T-cell (primary cell): ENCODE measurements at regions of chr11 and their contacts with region 1.

Region 1: DNA sequence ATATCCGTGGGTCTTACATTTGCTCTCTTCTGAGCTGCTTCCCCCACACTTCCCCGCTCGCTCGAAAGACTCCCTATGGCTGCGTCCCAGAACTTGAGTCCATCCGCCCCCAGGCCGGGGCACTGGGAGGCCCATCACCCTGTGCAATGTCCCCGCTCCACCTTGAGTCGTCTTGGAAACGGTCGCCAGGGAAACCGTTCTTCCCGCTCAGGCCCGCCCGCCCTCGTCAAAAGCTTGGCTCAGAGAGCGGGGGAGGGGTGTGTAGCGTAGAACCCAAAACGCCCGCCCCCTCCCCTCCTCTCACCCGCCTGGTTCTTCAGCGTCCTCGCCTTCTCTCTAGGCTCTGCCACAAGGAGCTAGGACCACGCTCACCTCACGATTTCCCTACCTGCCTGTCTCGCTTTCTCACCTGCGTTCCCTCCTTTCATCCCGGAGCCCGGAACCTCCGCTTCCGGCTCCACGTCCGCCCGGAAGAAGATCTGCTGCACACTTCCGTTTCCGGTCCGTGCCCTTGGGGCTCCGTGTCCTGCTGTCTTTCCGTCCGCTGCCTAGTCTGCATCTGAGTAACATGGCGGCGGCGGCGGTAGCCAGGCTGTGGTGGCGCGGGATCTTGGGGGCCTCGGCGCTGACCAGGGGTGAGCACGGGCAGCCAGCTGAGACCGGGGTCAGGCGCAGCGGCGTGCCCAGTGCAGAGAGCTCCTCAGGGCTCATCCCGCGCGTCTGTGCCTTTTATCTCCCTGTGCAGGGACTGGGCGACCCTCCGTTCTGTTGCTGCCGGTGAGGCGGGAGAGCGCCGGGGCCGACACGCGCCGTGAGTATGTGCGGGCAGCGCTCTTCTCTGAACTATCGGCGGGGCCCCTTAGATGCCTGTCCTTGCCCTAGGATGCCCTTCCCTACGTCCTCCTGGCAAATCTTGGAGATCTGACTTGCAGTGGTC is at the starts of genes KBTBD4 and NDUFS3:
- DNase-seq: peak; percentile 70 to 95 (median 83)
- ATAC-seq: peak; percentile 92 to 95 (median 94)
- H3K4me3 ChIP-seq: peak within 1 kb of the TSS; percentile 78 to 84
- H3K4me3 Mint-ChIP-seq: peak within 1 kb of the TSS; percentile 87 to 100 (median 100)
- H3K27ac ChIP-seq: peak within 1 kb of the TSS; percentile 77
- H3K27ac Mint-ChIP-seq: peak within 1 kb of the TSS; percentile 95 to 100
- H3K4me1 ChIP-seq: peaks cover 20 to 36% of the 10 kb centered on the region in 2 experiments
- H3K4me1 Mint-ChIP-seq: peaks cover 38 to 45% (median 44%) of the 10 kb centered on the region in 3 donors
- H3K27me3 ChIP-seq: no peaks in the 10 kb centered on the region
- H3K27me3 Mint-ChIP-seq: no peaks in the 10 kb centered on the region
- total RNA-seq, gene KBTBD4: 19.1 to 23.6 (median 21.6) TPM
- total RNA-seq, gene NDUFS3: 69.1 to 105 (median 76.1) TPM

Region 2: GRCh38 chr11:47589103-47589502 is 10.3 kb after region 1 on chr11:
- CTCF ChIA-PET with region 1: no interaction called
- POLR2A ChIA-PET with region 1: interaction called in 1 of 2 experiments, 10 read pairs
- DNase-seq: no peak
- ATAC-seq: no peak
- H3K4me3 ChIP-seq: no peak overlapping the region
- H3K4me3 Mint-ChIP-seq: no peak overlapping the region
- H3K27ac ChIP-seq: no peak overlapping the region
- H3K27ac Mint-ChIP-seq: no peak overlapping the region
- H3K4me1 ChIP-seq: peaks cover 0 to 11% of the 10 kb centered on the region in 2 experiments
- H3K4me1 Mint-ChIP-seq: peaks cover 0 to 10% (median 3%) of the 10 kb centered on the region in 3 donors
- H3K27me3 ChIP-seq: peaks cover 0 to 23% of the 10 kb centered on the region in 2 experiments
- H3K27me3 Mint-ChIP-seq: peaks cover 10 to 17% of the 10 kb centered on the region in 2 donors

Region 3: GRCh38 chr11:47642099-47642855 is 63.5 kb after region 1 on chr11 and contains the start of gene MTCH2:
- CTCF ChIA-PET with region 1: no interaction called
- POLR2A ChIA-PET with region 1: no interaction called
- DNase-seq: peak; percentile 87 to 98 (median 92)
- ATAC-seq: peak; percentile 89 to 95 (median 91)
- H3K4me3 ChIP-seq: peak within 1 kb of the TSS; percentile 78 to 99
- H3K4me3 Mint-ChIP-seq: peak within 1 kb of the TSS; percentile 90 to 96 (median 92)
- H3K27ac ChIP-seq: peak within 1 kb of the TSS; percentile 88
- H3K27ac Mint-ChIP-seq: peak within 1 kb of the TSS; percentile 92 to 96
- H3K4me1 ChIP-seq: peaks cover 8 to 24% of the 10 kb centered on the region in 2 experiments
- H3K4me1 Mint-ChIP-seq: peaks cover 19 to 32% (median 28%) of the 10 kb centered on the region in 3 donors
- H3K27me3 ChIP-seq: no peaks in the 10 kb centered on the region
- H3K27me3 Mint-ChIP-seq: no peaks in the 10 kb centered on the region
- total RNA-seq, gene MTCH2: 20.4 to 32.1 (median 26.7) TPM